Activated CD8-positive, alpha-beta memory T cell treated with anti-CD3 and anti-CD28 coated beads, Interleukin-2, amount 10 ng/mL, durations not matched to agents 7 days and 5 days (primary cell): ENCODE measurements at regions of chr1 and their contacts with region 1.

Region 1: GRCh38 chr1:84772428-84772943 is 82.2 kb upstream of the SSX2IP start:
- DNase-seq: peak; percentile 80
- ATAC-seq: peak; percentile 70
- H3K4me3 Mint-ChIP-seq: no peak overlapping the region
- H3K27ac Mint-ChIP-seq: no peak overlapping the region
- H3K4me1 Mint-ChIP-seq: no peaks in the 10 kb centered on the region
- H3K27me3 Mint-ChIP-seq: peaks cover 14% of the 10 kb centered on the region

Region 2: GRCh38 chr1:84758968-84759491 is 13.5 kb before region 1 on chr1:
- CTCF ChIA-PET with region 1: interaction called, 16 read pairs
- DNase-seq: no peak
- ATAC-seq: no peak
- H3K4me3 Mint-ChIP-seq: peak overlapping the region; percentile 1
- H3K27ac Mint-ChIP-seq: no peak overlapping the region
- H3K4me1 Mint-ChIP-seq: peaks cover 8% of the 10 kb centered on the region
- H3K27me3 Mint-ChIP-seq: peaks cover 11% of the 10 kb centered on the region